ENCODE measurements at regions of chrX and their contacts with region 1.

Region 1: DNA sequence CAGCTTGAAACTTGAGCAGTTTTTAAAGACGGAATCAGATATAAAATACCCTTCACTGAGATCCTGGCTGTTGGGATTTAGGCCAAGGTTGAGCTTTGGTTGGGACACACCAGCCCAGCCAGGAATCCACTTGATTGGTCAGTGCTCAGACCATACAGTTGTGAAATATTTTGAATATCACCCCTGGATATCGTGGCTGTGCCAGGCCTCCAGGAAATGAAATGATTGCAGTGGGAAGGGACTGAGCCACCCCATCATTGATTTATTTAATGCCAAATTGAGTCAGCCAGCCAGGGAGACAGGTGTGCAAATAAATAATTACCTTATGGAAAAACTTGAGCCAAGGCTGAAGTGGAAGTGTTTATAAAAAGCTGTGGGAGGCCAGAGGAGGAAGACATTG is 128.4 kb upstream of the SCML1 start:
- DNase-seq: no peak
- ATAC-seq: no peak
- H3K4me3 ChIP-seq: no peak overlapping the region
- H3K27ac ChIP-seq: no peak overlapping the region
- H3K4me1 ChIP-seq: no peaks in the 10 kb centered on the region
- H3K27me3 ChIP-seq: no peaks in the 10 kb centered on the region

Region 2: DNA sequence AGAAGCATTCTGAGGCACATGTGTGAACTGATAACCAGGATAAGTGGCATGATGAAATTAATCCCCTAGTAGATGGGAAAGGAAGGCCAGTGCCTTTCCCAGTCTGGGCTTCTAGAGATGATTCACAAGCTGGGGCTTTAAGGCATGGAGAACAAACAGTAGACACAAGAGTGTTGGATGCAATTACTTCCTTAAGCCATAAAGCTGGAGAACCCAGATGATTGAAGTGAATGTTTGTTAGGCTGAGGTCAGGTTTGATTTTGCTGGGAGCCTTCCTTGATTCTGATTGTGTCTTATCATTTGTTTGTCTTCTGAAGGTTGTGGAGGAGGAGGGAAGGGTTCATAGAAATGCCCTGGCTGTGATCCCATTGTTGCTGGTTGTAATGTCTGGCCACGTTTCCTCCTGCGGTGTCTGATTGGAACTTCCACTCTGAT is 108.7 kb before region 1 on chrX:
- intact Hi-C with region 1: no loop called
- DNase-seq: no peak
- ATAC-seq: peak; percentile 60 to 76
- H3K4me3 ChIP-seq: no peak overlapping the region
- H3K27ac ChIP-seq: no peak overlapping the region
- H3K4me1 ChIP-seq: peaks cover 8% of the 10 kb centered on the region
- H3K27me3 ChIP-seq: no peaks in the 10 kb centered on the region

Region 3: GRCh38 chrX:17669458-17669857 is 60.6 kb after region 1 on chrX:
- intact Hi-C with region 1: loop called in 1 of 4 experiments (anchors 10 kb)
- DNase-seq: no peak
- ATAC-seq: no peak
- H3K4me3 ChIP-seq: no peak overlapping the region
- H3K27ac ChIP-seq: no peak overlapping the region
- H3K4me1 ChIP-seq: no peaks in the 10 kb centered on the region
- H3K27me3 ChIP-seq: no peaks in the 10 kb centered on the region